MCF 10A (cell line): ENCODE measurements at regions of chrX and their contacts with region 1.

Region 1: GRCh38 chrX:102959471-102959870 is 22.4 kb downstream of the RAB40AL start:
- DNase-seq: peak; percentile 68
- H3K4me3 Mint-ChIP-seq: no peak overlapping the region
- H3K27ac Mint-ChIP-seq: no peak overlapping the region
- H3K4me1 Mint-ChIP-seq: no peaks in the 10 kb centered on the region
- H3K27me3 Mint-ChIP-seq: peaks cover 56% of the 10 kb centered on the region
- CTCF ChIP-seq: no peak

Region 2: DNA sequence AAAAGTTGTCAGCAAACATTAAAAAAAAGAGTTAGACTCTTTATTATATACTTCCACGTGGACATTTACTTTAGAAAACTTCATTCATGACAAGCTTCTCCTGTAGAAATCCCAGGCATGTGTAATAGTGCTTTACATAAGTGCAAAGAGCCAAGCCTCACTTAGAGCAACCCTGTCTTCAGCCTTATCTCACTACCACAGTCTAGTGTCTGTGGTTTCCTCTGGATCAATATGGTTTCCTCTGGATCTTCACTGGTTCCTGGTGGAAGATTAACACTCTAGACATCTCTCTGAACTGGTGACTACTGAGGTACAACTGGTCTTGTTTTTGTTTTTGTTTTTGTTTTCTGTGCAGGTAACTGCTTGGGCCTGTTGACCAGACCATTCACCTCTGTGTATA is 378.6 kb before region 1 on chrX:
- CTCF ChIA-PET with region 1: no interaction called
- POLR2A ChIA-PET with region 1: no interaction called
- intact Hi-C with region 1: no loop called
- DNase-seq: no peak
- H3K4me3 Mint-ChIP-seq: no peak overlapping the region
- H3K27ac Mint-ChIP-seq: no peak overlapping the region
- H3K4me1 Mint-ChIP-seq: no peaks in the 10 kb centered on the region
- H3K27me3 Mint-ChIP-seq: peaks cover 19% of the 10 kb centered on the region
- CTCF ChIP-seq: no peak

Region 3: GRCh38 chrX:103157496-103158320 is 198.2 kb after region 1 on chrX:
- CTCF ChIA-PET with region 1: interaction called, 6 read pairs
- POLR2A ChIA-PET with region 1: no interaction called
- intact Hi-C with region 1: loop called (anchors 2 kb)
- DNase-seq: peak; percentile 59
- H3K4me3 Mint-ChIP-seq: no peak overlapping the region
- H3K27ac Mint-ChIP-seq: no peak overlapping the region
- H3K4me1 Mint-ChIP-seq: peaks cover 15% of the 10 kb centered on the region
- H3K27me3 Mint-ChIP-seq: peaks cover 58% of the 10 kb centered on the region
- CTCF ChIP-seq: peak; percentile 81